ENCODE measurements at regions of chr1 and their contacts with region 1.

Region 1: DNA sequence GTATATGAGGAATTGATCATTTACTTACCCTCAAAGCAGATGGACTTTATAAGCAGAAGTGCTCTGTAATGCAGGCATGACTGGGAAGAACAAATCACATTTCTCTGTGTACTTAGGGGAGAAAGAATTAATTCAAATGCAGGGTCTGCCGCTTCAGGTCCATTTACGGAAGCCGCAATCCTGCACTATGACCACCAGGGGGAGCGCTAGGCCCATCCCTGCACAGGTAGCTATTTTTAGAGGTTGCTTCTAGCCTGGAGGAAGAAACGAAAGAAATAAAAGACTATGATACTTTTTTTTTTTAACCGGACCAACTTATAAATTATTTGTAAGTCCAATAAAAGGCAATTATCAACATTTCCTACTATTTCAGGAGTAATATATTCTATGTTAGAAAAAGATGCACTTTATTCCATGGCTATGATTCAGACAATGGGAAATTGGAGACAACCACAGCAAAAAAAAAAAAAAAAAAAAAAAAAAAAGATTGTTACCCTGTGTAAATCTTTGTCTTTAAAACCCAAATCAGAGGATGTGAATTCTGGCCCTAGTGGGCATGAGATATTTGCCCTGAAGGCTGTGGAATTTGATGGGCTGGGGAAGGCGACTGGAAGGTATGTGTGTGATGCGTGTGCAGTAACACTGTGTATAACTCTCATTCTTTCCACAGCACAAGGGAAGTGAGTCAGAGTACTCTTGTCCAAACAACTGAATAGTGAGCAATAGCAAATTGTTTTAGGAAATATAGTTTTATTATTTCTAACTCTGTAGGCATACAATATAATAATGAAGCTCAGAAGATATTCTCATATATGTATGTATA is 12.9 kb upstream of the FYB2 start:
- DNase-seq: peak; percentile 97
- ATAC-seq: peak; percentile 96
- H3K4me3 ChIP-seq: no peak overlapping the region
- H3K27ac ChIP-seq: peak overlapping the region; percentile 88
- H3K4me1 ChIP-seq: peaks cover 5% of the 10 kb centered on the region; the same call in 1 of the 2 replicates
- H3K27me3 ChIP-seq: no peaks in the 10 kb centered on the region
- CTCF ChIP-seq: peak; percentile 97
- POLR2A ChIP-seq: 0 out of 2 replicates have a peak, but pooled peaks have one; percentile 51
- RAD21 ChIP-seq: peak; percentile 98

Region 2: GRCh38 chr1:56967900-56968832 is 136.1 kb after region 1 on chr1:
- CTCF ChIA-PET with region 1: no interaction called
- POLR2A ChIA-PET with region 1: no interaction called
- dilution Hi-C with region 1: no loop called
- in situ Hi-C with region 1: no loop called
- intact Hi-C with region 1: loop called (anchors 5 kb)
- DNase-seq: peak; percentile 15
- ATAC-seq: no peak
- H3K4me3 ChIP-seq: no peak overlapping the region
- H3K27ac ChIP-seq: no peak overlapping the region
- H3K4me1 ChIP-seq: no peaks in the 10 kb centered on the region; the same call in 1 of the 2 replicates
- H3K27me3 ChIP-seq: no peaks in the 10 kb centered on the region; the same call in none of the 2 replicates
- CTCF ChIP-seq: peak; percentile 50
- POLR2A ChIP-seq: no peak
- RAD21 ChIP-seq: peak; percentile 43

Region 3: DNA sequence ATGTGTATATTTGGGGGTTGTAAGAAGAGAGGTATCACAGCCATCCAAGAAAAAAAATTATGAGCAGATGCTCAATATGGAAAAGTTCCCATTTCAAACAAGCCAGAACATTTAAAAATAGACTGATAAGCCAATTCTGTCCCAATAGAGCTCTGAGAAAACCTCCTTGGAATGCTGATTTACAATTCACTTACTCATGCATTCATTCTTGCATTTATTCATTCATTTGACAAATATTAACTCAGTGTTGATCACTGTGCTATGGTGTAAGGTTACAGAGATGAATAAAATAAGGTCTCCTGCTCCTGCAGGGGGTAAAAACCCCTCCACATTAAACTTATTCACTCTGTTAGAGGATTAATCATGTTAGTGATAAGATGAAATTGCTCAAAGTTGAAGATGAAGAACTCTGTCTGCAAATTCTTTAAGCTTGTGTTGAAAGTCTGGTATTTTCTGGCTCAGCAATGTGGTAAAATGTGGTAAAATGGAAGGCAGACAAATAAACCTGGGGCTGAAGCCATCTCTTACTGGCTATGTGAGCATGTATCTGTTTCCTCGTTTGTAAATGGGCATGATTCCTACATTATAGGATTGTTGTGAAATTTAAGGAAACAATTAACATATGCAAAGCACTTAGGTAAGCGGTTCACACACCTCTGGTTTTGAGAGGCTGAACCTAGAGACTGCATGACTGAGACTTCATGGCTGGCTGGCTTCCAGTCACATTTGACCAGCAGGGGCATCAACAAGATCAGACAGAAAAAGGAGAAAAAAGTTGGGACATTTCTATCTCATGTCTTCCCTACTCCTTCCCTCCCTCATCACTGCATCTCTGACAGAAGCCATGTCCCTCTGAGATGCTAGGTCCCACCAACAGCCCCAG is 636.8 kb after region 1 on chr1:
- CTCF ChIA-PET with region 1: no interaction called
- POLR2A ChIA-PET with region 1: no interaction called
- dilution Hi-C with region 1: no loop called
- in situ Hi-C with region 1: no loop called
- intact Hi-C with region 1: loop called (anchors 5 kb)
- DNase-seq: peak; percentile 76
- ATAC-seq: peak; percentile 69
- H3K4me3 ChIP-seq: no peak overlapping the region
- H3K27ac ChIP-seq: peak overlapping the region; percentile 87
- H3K4me1 ChIP-seq: peaks cover 13% of the 10 kb centered on the region
- H3K27me3 ChIP-seq: no peaks in the 10 kb centered on the region
- CTCF ChIP-seq: no peak
- POLR2A ChIP-seq: no peak
- RAD21 ChIP-seq: no peak

Region 4: DNA sequence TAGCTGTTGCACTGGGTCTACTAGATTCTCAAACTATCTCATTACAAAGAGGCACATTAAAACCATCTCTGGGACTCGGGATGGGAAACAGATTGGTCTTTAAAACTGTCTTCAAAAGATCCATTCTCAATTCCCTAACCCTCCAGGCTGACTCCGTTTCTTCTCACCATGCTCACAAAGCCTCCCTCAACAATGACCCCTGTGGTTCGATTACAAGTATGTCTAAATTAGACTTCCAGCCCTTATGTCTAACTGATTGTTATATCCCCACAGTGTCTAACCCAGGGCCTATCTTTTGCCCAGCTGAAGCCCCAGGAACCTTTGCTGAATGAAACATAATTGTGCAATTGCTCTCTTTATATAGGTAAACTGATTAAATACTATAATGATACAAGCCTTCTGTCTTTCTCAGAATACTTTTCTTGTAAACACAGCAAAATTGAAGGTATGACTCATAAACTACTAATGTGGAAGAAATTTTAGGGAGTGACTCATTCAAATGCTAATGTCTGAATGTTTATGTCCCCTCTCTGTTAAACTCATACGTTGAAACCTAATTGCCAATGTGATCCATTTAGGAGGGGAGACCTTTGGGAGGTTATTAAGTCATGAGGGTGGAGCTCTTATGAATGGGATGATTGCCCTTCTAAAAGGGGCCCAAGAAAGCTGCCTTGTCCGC is 657.4 kb after region 1 on chr1:
- CTCF ChIA-PET with region 1: no interaction called
- POLR2A ChIA-PET with region 1: no interaction called
- dilution Hi-C with region 1: no loop called
- in situ Hi-C with region 1: loop called (anchors 25 kb)
- intact Hi-C with region 1: no loop called
- DNase-seq: peak; percentile 91
- ATAC-seq: peak; percentile 70
- H3K4me3 ChIP-seq: no peak overlapping the region
- H3K27ac ChIP-seq: peak overlapping the region; percentile 94
- H3K4me1 ChIP-seq: peaks cover 16% of the 10 kb centered on the region
- H3K27me3 ChIP-seq: no peaks in the 10 kb centered on the region
- CTCF ChIP-seq: no peak
- POLR2A ChIP-seq: no peak
- RAD21 ChIP-seq: no peak

Region 5: DNA sequence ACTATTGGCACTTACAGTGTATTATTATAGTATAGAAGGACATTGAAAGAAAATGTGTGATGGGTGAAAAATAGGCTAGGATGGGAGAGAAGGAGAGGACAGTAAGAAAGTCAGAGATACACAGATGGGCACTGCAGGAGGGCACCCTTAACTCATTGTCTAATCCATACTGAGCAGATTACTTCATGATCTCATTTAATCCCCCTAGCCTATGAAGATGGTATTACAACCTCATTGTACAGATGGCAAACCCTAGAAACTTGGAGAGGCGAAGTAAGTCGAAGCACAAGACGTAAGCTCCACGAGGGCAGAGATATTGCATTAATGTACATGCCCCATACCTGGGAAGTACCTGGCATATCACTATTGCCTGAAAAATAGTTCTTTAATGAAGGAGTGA is 938.7 kb after region 1 on chr1:
- CTCF ChIA-PET with region 1: no interaction called
- POLR2A ChIA-PET with region 1: no interaction called
- dilution Hi-C with region 1: no loop called
- in situ Hi-C with region 1: no loop called
- intact Hi-C with region 1: loop called (anchors 10 kb)
- DNase-seq: peak; percentile 4
- ATAC-seq: peak; percentile 48; the same call in 1 of the 2 replicates
- H3K4me3 ChIP-seq: no peak overlapping the region
- H3K27ac ChIP-seq: no peak overlapping the region
- H3K4me1 ChIP-seq: no peaks in the 10 kb centered on the region
- H3K27me3 ChIP-seq: no peaks in the 10 kb centered on the region
- CTCF ChIP-seq: peak; percentile 28; the same call in 1 of the 2 replicates
- POLR2A ChIP-seq: no peak
- RAD21 ChIP-seq: no peak

Region 6: GRCh38 chr1:58162952-58163550 is 1331.0 kb after region 1 on chr1:
- CTCF ChIA-PET with region 1: no interaction called
- POLR2A ChIA-PET with region 1: no interaction called
- dilution Hi-C with region 1: no loop called
- in situ Hi-C with region 1: no loop called
- intact Hi-C with region 1: loop called (anchors 1 kb)
- DNase-seq: peak; percentile 52
- ATAC-seq: peak; percentile 92
- H3K4me3 ChIP-seq: no peak overlapping the region
- H3K27ac ChIP-seq: no peak overlapping the region
- H3K4me1 ChIP-seq: no peaks in the 10 kb centered on the region
- H3K27me3 ChIP-seq: no peaks in the 10 kb centered on the region
- CTCF ChIP-seq: peak; percentile 72
- POLR2A ChIP-seq: no peak
- RAD21 ChIP-seq: peak; percentile 63

Region 7: GRCh38 chr1:58652651-58653184 is 1820.6 kb after region 1 on chr1:
- CTCF ChIA-PET with region 1: no interaction called
- POLR2A ChIA-PET with region 1: no interaction called
- dilution Hi-C with region 1: no loop called
- in situ Hi-C with region 1: no loop called
- intact Hi-C with region 1: loop called (anchors 5 kb)
- DNase-seq: peak; percentile 84
- ATAC-seq: peak; percentile 94
- H3K4me3 ChIP-seq: no peak overlapping the region
- H3K27ac ChIP-seq: no peak overlapping the region
- H3K4me1 ChIP-seq: no peaks in the 10 kb centered on the region
- H3K27me3 ChIP-seq: no peaks in the 10 kb centered on the region
- CTCF ChIP-seq: peak; percentile 92
- POLR2A ChIP-seq: no peak
- RAD21 ChIP-seq: peak; percentile 94